ENCODE measurements at regions of chr1 and their contacts with region 1.

Region 1: DNA sequence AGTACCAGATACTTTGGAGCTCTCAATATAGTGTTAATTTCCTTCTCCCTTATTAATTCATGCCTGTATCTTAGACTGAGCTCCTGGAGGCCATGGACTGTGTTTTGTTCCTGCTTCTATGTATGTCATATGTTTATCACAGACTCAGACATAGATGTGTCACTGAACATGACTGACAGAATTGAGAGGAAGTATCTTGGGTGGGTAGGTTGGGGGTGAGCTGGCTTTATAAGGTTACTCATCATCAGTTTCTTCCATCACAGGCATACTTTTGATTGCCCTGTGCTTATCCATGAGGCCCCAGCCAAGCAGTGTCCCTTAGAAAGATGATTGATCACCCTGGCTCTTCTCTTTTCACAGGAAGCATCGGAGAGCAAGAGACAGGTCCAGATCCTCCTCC is 5.6 kb upstream of the SH3D21 start:
- DNase-seq: no peak
- H3K4me3 Mint-ChIP-seq: peak overlapping the region; percentile 41
- H3K27ac Mint-ChIP-seq: peak overlapping the region; percentile 94
- H3K4me1 Mint-ChIP-seq: peaks cover 22% of the 10 kb centered on the region
- H3K27me3 Mint-ChIP-seq: no peaks in the 10 kb centered on the region
- CTCF ChIP-seq: no peak

Region 2: DNA sequence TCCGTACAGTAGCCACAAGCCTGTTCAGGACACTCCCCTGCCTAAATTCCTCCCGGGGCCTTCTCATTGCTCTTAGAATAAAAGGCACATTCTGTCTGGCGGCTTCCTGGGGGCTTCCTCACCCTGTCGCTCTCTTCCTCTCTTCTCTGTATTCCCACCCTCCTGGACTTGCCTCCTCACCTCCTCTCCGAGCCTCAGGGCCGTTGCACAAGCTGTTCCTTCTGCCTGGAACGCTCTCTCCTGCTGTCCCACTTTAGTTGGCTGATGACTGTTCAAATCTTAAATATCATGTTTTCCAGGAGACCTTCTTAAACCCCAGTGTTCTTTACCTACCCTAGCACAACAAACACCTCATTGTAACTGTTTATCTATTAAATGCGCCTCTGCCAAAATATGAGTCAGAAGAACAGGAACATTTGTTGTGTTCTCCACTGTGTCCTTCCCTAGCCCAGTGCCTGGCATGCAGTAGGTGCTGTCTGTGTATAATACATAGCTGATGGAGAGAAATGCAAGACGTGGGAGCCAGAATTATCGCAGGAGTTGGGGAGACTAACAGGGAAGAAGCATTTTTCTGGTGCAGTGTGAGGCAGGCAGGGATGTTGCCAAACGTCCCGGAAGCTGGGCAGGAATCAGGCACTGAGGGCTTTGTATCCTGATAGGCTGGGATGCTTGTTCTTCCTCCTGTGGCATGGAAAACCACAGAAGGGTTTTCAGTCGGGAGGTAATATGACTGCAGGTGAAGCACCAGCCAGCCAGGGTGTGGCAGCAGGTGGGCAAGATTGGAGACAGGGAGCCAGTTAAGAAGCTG is 100.4 kb before region 1 on chr1:
- CTCF ChIA-PET with region 1: no interaction called
- intact Hi-C with region 1: no loop called
- DNase-seq: peak; percentile 55
- H3K4me3 Mint-ChIP-seq: peak overlapping the region; percentile 4
- H3K27ac Mint-ChIP-seq: peak overlapping the region; percentile 53
- H3K4me1 Mint-ChIP-seq: peaks cover 27% of the 10 kb centered on the region
- H3K27me3 Mint-ChIP-seq: no peaks in the 10 kb centered on the region
- CTCF ChIP-seq: no peak

Region 3: DNA sequence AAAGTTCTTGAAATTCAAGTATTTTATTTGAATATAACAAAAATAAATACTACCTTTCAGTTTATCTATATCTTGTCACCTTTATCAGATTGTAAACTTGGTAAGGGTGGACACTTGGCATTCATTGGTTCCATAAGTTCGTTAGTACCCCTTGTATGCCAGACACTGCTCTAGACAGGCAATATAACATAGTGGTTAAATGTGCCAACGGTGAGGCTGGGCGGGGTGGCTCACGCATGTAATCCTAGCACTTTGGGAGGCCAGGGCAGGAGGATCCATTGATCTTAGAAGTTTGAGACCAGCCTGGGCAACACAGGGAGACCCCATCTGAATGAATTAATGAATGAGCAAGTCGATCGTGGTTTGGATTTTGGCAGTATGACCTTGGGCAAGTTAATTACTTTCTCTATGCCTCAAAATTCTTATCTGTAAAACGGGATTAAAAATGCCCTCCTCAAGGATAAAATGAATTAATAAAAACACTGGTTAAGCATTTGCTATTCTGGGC is 20.7 kb before region 1 on chr1:
- CTCF ChIA-PET with region 1: no interaction called
- intact Hi-C with region 1: no loop called
- DNase-seq: no peak
- H3K4me3 Mint-ChIP-seq: no peak overlapping the region
- H3K27ac Mint-ChIP-seq: no peak overlapping the region
- H3K4me1 Mint-ChIP-seq: no peaks in the 10 kb centered on the region
- H3K27me3 Mint-ChIP-seq: no peaks in the 10 kb centered on the region
- CTCF ChIP-seq: no peak

Region 4: GRCh38 chr1:36420836-36421664 is 120.5 kb after region 1 on chr1:
- CTCF ChIA-PET with region 1: no interaction called
- intact Hi-C with region 1: loop called (anchors 2 kb)
- DNase-seq: peak; percentile 94
- H3K4me3 Mint-ChIP-seq: no peak overlapping the region
- H3K27ac Mint-ChIP-seq: peak overlapping the region; percentile 37
- H3K4me1 Mint-ChIP-seq: peaks cover 19% of the 10 kb centered on the region
- H3K27me3 Mint-ChIP-seq: no peaks in the 10 kb centered on the region
- CTCF ChIP-seq: peak; percentile 95

Measured in Calu3 (cell line).